IMR-90 (cell line): ENCODE measurements at regions of chr5 and their contacts with region 1.

Region 1: DNA sequence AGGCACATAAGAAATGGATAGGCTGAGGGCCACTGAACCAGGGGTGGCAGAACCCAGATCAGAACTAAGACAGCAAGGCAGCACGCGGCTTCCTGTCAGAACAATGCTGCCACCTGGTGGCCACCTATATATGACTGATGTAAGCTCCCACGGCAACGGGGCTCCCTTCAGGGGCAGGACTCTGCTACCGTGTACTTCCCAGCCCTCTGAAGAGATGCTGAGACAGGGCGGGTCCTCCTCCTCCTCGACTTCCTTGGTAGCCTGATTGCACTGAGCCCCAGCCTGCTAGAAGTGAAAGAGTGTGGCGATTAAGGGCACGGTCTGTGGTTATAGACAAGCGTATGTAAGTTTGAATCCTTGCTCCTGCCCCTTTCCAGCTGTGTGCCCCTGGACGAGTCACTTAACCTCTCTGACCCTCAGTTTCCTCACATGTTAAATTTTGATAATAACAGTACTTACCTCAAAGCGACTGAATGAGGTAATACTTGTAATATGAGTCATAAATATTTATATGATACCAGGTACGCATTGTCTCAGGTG is 13.3 kb downstream of the RPS14 start:
- DNase-seq: peak; percentile 89
- ATAC-seq: peak; percentile 81
- H3K4me3 ChIP-seq: no peak overlapping the region
- H3K27ac ChIP-seq: no peak overlapping the region
- H3K4me1 ChIP-seq: peaks cover 5% of the 10 kb centered on the region
- H3K27me3 ChIP-seq: no peaks in the 10 kb centered on the region
- CTCF ChIP-seq: peak; percentile 85
- POLR2A ChIP-seq: no peak
- RAD21 ChIP-seq: peak; percentile 88

Region 2: DNA sequence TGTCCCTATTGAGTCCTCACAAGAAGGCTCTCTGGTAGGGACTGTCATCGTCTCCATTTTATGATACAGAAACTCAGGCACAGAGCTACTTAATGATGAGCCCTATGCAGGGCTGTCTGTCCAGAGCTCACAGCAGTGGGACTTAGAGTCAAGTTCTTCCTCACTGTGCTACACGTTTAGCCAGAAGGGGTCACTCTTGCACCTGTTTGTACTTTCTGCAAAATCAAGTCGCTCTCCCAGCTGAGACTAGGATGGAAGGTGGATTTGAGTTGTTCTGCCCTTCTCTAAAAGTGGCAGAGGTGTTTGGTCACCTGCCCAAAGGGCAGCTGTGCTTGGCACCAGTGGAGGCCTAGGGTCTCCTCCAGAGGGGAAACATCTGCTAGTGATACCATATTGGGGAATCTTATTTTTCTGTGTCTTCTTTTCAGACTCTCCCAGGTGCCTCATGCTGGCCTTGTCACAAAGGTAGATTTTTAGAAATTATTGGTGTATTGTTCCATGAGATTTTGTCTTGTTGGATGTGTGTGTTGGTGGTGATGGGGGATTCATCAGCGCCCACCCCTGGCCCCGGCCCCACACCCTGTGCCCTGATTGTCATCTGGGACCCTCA is 601.9 kb before region 1 on chr5:
- CTCF ChIA-PET with region 1: no interaction called
- POLR2A ChIA-PET with region 1: no interaction called
- dilution Hi-C with region 1: no loop called
- in situ Hi-C with region 1: loop called (anchors 25 kb)
- intact Hi-C with region 1: loop called (anchors 10 kb)
- DNase-seq: peak; percentile 91
- ATAC-seq: peak; percentile 79
- H3K4me3 ChIP-seq: no peak overlapping the region
- H3K27ac ChIP-seq: no peak overlapping the region
- H3K4me1 ChIP-seq: no peaks in the 10 kb centered on the region
- H3K27me3 ChIP-seq: peaks cover 7% of the 10 kb centered on the region; the same call in 1 of the 2 replicates
- CTCF ChIP-seq: peak; percentile 80
- POLR2A ChIP-seq: no peak
- RAD21 ChIP-seq: peak; percentile 86

Region 3: DNA sequence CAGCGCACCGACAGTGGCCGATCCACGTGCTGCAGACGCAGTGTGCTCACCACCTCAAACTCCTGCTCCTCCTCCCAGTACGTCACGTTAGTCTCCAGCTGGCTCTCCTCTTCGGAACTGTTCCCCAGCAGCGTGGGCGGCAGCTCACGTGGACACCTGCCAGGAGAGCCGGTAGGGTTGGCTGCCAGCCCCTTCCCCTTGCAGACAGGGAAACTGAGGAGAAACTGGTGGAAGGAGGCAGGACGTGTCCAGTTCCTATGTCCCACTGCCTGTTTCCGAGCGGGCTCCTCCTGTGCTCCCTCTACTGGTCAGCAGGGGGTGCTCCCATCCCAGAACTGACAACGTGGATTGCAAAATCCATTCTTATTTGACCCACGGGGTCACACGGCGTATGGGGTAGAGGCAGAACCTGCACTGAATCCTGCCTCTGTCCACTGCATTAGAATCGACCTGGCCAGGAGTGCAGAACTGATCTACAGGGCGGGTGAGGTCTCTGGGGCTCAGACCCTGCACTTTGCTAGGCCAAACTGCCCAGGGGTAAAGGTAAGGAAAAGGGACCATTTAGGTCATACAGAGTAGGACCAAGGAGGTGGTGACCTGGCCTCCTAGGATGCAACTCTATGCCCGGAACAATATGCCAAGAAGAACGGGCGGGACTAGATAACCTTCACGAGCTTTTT is 306.3 kb before region 1 on chr5:
- CTCF ChIA-PET with region 1: no interaction called
- POLR2A ChIA-PET with region 1: no interaction called
- dilution Hi-C with region 1: no loop called
- in situ Hi-C with region 1: no loop called
- intact Hi-C with region 1: loop called (anchors 1 kb)
- DNase-seq: peak; percentile 78
- ATAC-seq: peak; percentile 87
- H3K4me3 ChIP-seq: no peak overlapping the region
- H3K27ac ChIP-seq: 0 out of 2 replicates have a peak overlapping the region, but pooled peaks have one; percentile 18
- H3K4me1 ChIP-seq: peaks cover 31% of the 10 kb centered on the region
- H3K27me3 ChIP-seq: no peaks in the 10 kb centered on the region
- CTCF ChIP-seq: peak; percentile 92
- POLR2A ChIP-seq: peak; percentile 42; the same call in 1 of the 2 replicates
- RAD21 ChIP-seq: peak; percentile 96

Region 4: GRCh38 chr5:150217873-150218692 is 218.1 kb before region 1 on chr5:
- CTCF ChIA-PET with region 1: no interaction called
- POLR2A ChIA-PET with region 1: no interaction called
- dilution Hi-C with region 1: no loop called
- in situ Hi-C with region 1: no loop called
- intact Hi-C with region 1: loop called (anchors 2 kb)
- DNase-seq: peak; percentile 79
- ATAC-seq: peak; percentile 96
- H3K4me3 ChIP-seq: no peak overlapping the region
- H3K27ac ChIP-seq: no peak overlapping the region
- H3K4me1 ChIP-seq: no peaks in the 10 kb centered on the region
- H3K27me3 ChIP-seq: no peaks in the 10 kb centered on the region; the same call in 1 of the 2 replicates
- CTCF ChIP-seq: peak; percentile 92
- POLR2A ChIP-seq: no peak
- RAD21 ChIP-seq: peak; percentile 96

Region 5: DNA sequence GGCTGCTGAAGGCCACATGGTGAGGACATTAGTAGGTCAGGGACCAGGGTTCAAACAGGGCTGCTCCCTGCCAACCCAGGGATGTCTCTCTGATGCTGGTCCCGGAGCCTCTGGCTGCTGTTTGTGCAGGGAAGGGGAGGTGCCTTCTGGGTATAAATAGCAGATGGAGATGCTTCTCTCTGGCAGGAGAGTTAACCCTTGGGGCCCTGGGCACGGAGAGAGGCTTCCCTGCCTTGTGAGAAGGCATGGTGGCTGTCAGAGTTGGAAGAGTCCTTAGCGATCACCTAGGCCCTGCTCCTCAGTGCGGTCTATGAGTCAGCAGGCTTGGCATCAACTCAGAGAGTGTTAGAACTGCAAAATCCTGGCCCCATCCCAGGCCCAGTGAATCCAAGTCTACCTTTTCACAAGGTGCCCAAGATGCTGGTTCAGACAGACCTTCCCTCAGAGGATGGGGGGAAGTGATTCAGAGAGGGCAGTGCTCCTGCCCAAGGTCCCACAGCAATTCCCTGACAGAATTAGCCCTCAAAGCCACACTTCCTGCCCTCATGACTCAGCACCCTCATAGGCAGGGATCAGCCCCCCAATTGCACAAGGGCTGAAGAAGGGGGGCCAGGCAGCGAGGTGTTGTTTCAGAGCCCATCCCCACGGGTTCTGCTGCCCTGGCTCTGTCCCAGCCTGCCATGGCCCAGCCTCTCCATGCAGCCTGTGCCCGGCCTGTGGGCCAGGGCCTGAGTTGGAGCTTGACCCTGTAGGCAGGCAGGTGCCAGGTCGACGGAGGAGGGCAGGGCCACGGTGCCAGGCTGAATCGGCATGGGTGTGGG is 172.2 kb before region 1 on chr5:
- CTCF ChIA-PET with region 1: no interaction called
- POLR2A ChIA-PET with region 1: no interaction called
- dilution Hi-C with region 1: no loop called
- in situ Hi-C with region 1: loop called (anchors 10 kb)
- intact Hi-C with region 1: no loop called
- DNase-seq: peak; percentile 90
- ATAC-seq: peak; percentile 88
- H3K4me3 ChIP-seq: no peak overlapping the region
- H3K27ac ChIP-seq: peak overlapping the region; percentile 58
- H3K4me1 ChIP-seq: peaks cover 25% of the 10 kb centered on the region
- H3K27me3 ChIP-seq: no peaks in the 10 kb centered on the region
- CTCF ChIP-seq: no peak
- POLR2A ChIP-seq: no peak
- RAD21 ChIP-seq: no peak

Region 6: DNA sequence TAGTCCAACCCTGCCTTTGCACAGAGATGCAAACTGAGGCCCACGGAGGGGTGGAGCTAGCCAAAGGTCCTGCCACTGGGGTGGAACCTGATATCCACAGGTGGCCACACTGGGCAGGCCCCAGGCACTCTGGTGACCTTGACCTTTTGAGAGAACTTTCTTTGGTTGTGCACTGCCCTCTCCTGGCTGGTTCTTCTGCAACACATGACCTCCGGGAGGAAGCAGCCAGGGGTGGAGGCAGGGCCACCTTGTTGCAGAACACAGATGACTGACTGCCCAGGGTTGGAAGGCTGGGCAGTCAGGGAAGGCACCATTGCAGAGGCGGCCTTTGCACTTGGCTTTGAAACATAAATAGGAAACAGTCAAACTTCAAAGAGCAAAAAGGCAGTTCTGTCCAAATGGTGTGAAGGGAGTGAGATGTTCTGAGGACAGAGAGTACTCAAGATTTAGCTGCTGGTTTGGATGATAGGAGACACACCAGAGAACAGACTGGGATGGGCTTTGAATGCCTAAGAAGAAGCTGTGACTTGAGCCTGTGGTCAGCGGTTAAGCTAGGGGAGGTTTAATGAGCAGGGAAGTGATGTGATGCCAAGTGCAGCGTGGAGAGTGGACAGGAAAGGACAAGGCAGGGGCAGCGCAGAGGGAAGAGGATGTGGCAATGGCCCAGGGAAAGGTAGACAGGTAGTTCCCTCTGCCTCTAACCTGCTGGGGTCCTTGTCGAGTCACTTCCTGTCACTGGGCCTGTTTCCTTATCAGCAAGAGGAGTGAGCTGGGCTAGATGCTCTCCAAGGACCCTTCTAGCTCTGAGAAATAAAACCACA is 85.5 kb before region 1 on chr5:
- CTCF ChIA-PET with region 1: interaction called, 5 read pairs
- POLR2A ChIA-PET with region 1: no interaction called
- dilution Hi-C with region 1: no loop called
- in situ Hi-C with region 1: no loop called
- intact Hi-C with region 1: loop called (anchors 2 kb)
- DNase-seq: peak; percentile 71
- ATAC-seq: peak; percentile 98
- H3K4me3 ChIP-seq: no peak overlapping the region
- H3K27ac ChIP-seq: no peak overlapping the region
- H3K4me1 ChIP-seq: no peaks in the 10 kb centered on the region
- H3K27me3 ChIP-seq: no peaks in the 10 kb centered on the region
- CTCF ChIP-seq: peak; percentile 83
- POLR2A ChIP-seq: no peak
- RAD21 ChIP-seq: peak; percentile 87

Region 7: GRCh38 chr5:150377964-150378694 is 58.1 kb before region 1 on chr5:
- CTCF ChIA-PET with region 1: interaction called, 3 read pairs
- POLR2A ChIA-PET with region 1: interaction called, 5 read pairs
- dilution Hi-C with region 1: no loop called
- in situ Hi-C with region 1: no loop called
- intact Hi-C with region 1: loop called (anchors 1 kb)
- DNase-seq: peak; percentile 99
- ATAC-seq: peak; percentile 85
- H3K4me3 ChIP-seq: no peak overlapping the region
- H3K27ac ChIP-seq: peak overlapping the region; percentile 87
- H3K4me1 ChIP-seq: peaks cover 20% of the 10 kb centered on the region
- H3K27me3 ChIP-seq: no peaks in the 10 kb centered on the region
- CTCF ChIP-seq: no peak
- POLR2A ChIP-seq: peak; percentile 12; the same call in 1 of the 2 replicates
- RAD21 ChIP-seq: no peak; the same call in 1 of the 2 replicates